ENCODE measurements at regions of chr18 and their contacts with region 1.

Region 1: GRCh38 chr18:31101183-31102024 is 817 bp downstream of the DSC2 start:
- DNase-seq: peak; percentile 73
- H3K4me3 ChIP-seq: peak overlapping the region; percentile 62
- H3K27ac ChIP-seq: peak overlapping the region; percentile 94
- H3K4me1 ChIP-seq: no peaks in the 10 kb centered on the region
- H3K27me3 ChIP-seq: no peaks in the 10 kb centered on the region
- CTCF ChIP-seq: no peak

Region 2: GRCh38 chr18:30568333-30568732 is 533.1 kb before region 1 on chr18:
- intact Hi-C with region 1: no loop called
- DNase-seq: no peak
- H3K4me3 ChIP-seq: no peak overlapping the region
- H3K27ac ChIP-seq: no peak overlapping the region
- H3K4me1 ChIP-seq: no peaks in the 10 kb centered on the region
- H3K27me3 ChIP-seq: no peaks in the 10 kb centered on the region
- CTCF ChIP-seq: no peak

Region 3: GRCh38 chr18:30915336-30915988 is 185.9 kb before region 1 on chr18:
- intact Hi-C with region 1: no loop called
- DNase-seq: no peak
- H3K4me3 ChIP-seq: no peak overlapping the region
- H3K27ac ChIP-seq: no peak overlapping the region
- H3K4me1 ChIP-seq: no peaks in the 10 kb centered on the region
- H3K27me3 ChIP-seq: no peaks in the 10 kb centered on the region
- CTCF ChIP-seq: no peak

Region 4: DNA sequence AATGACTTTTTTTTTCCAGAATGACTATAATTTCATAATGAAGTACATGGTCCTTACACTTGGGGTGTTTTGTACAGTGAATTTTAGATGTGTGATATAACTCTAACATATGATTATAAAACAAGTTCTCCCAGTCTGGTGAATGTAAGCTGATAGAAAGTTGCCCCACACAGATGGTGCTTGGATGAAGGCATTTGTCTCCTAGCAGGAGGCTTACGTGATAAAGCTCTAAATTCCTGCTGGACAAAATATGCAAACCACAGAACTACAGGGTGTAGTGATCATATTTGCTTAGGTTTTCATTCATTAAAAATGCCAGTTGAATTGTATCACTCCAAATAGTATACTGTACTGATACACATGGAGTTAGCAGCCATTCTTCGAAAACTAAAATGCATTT is 144.3 kb before region 1 on chr18:
- intact Hi-C with region 1: no loop called
- DNase-seq: no peak
- H3K4me3 ChIP-seq: no peak overlapping the region
- H3K27ac ChIP-seq: no peak overlapping the region
- H3K4me1 ChIP-seq: no peaks in the 10 kb centered on the region
- H3K27me3 ChIP-seq: no peaks in the 10 kb centered on the region
- CTCF ChIP-seq: no peak

Region 5: GRCh38 chr18:31197676-31198075 is 96.3 kb after region 1 on chr18:
- intact Hi-C with region 1: loop called (anchors 5 kb)
- DNase-seq: peak; percentile 32
- H3K4me3 ChIP-seq: no peak overlapping the region
- H3K27ac ChIP-seq: no peak overlapping the region
- H3K4me1 ChIP-seq: peaks cover 3% of the 10 kb centered on the region
- H3K27me3 ChIP-seq: no peaks in the 10 kb centered on the region
- CTCF ChIP-seq: no peak

Measured in colonic mucosa (tissue), 4 donors.